ENCODE measurements at regions of chr6 and their contacts with region 1.

Region 1: GRCh38 chr6:42726485-42727086 is 4.2 kb upstream of the PRPH2 start:
- DNase-seq: peak; percentile 66
- ATAC-seq: peak; percentile 96
- H3K4me3 ChIP-seq: peak overlapping the region; percentile 58; the same call in 1 of the 2 replicates
- H3K27ac ChIP-seq: peak overlapping the region; percentile 60
- H3K4me1 ChIP-seq: peaks cover 10% of the 10 kb centered on the region; the same call in 1 of the 2 replicates
- H3K27me3 ChIP-seq: no peaks in the 10 kb centered on the region
- CTCF ChIP-seq: peak; percentile 76 to 97 (median 89)
- EP300 ChIP-seq: no peak
- POLR2A ChIP-seq: no peak
- RAD21 ChIP-seq: peak; percentile 92

Region 2: GRCh38 chr6:42692137-42692911 is 34.3 kb before region 1 on chr6:
- CTCF ChIA-PET with region 1: interaction called, 19 read pairs
- POLR2A ChIA-PET with region 1: no interaction called
- RAD21 ChIA-PET with region 1: interaction called, 3 read pairs
- SMC1A ChIA-PET with region 1: interaction called, 13 read pairs
- in situ Hi-C with region 1: no loop called
- intact Hi-C with region 1: no loop called
- DNase-seq: no peak
- ATAC-seq: no peak
- H3K4me3 ChIP-seq: no peak overlapping the region
- H3K27ac ChIP-seq: no peak overlapping the region
- H3K4me1 ChIP-seq: no peaks in the 10 kb centered on the region
- H3K27me3 ChIP-seq: no peaks in the 10 kb centered on the region
- CTCF ChIP-seq: no peak
- EP300 ChIP-seq: no peak
- POLR2A ChIP-seq: no peak
- RAD21 ChIP-seq: no peak

Region 3: DNA sequence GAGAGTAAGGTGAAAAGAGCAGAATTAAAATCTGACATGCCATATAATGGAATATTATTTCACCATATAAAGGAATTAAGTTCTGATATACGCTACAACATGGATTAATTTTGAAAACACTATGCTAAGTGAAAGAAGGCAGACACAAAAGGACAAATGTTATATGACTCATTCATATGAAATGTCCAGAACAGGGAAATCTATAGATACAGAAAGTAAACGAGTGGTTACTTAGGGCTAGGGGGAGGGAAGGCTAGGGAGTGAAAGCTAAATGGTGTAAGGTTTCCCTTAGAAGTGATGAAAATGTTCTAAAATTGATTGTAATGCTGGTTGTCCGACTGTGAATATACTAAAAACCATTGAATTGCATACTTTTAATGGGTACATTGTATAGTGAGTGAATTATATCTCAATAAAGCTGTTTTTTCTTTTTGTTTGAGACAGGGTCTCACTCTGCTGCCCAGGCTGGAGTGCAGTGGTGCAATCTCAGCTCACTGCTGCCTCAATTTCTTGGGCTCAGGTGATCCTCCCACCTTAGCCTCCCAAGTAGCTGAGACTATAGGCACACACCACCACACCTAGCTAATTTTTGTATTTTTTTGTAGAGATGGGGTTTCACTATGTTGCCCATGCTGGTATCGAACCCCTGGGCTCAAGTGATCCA is 12.4 kb before region 1 on chr6:
- CTCF ChIA-PET with region 1: interaction called, 11 read pairs
- POLR2A ChIA-PET with region 1: interaction called, 3 read pairs
- RAD21 ChIA-PET with region 1: no interaction called
- SMC1A ChIA-PET with region 1: interaction called, 9 read pairs
- in situ Hi-C with region 1: no loop called
- intact Hi-C with region 1: no loop called
- DNase-seq: no peak
- ATAC-seq: 0 out of 3 replicates have a peak, but pooled peaks have one; percentile 26
- H3K4me3 ChIP-seq: no peak overlapping the region
- H3K27ac ChIP-seq: no peak overlapping the region
- H3K4me1 ChIP-seq: peaks cover 4% of the 10 kb centered on the region; the same call in 1 of the 2 replicates
- H3K27me3 ChIP-seq: no peaks in the 10 kb centered on the region; a peak in 1 of 4 replicates
- CTCF ChIP-seq: no peak
- EP300 ChIP-seq: no peak
- POLR2A ChIP-seq: no peak
- RAD21 ChIP-seq: no peak

Region 4: DNA sequence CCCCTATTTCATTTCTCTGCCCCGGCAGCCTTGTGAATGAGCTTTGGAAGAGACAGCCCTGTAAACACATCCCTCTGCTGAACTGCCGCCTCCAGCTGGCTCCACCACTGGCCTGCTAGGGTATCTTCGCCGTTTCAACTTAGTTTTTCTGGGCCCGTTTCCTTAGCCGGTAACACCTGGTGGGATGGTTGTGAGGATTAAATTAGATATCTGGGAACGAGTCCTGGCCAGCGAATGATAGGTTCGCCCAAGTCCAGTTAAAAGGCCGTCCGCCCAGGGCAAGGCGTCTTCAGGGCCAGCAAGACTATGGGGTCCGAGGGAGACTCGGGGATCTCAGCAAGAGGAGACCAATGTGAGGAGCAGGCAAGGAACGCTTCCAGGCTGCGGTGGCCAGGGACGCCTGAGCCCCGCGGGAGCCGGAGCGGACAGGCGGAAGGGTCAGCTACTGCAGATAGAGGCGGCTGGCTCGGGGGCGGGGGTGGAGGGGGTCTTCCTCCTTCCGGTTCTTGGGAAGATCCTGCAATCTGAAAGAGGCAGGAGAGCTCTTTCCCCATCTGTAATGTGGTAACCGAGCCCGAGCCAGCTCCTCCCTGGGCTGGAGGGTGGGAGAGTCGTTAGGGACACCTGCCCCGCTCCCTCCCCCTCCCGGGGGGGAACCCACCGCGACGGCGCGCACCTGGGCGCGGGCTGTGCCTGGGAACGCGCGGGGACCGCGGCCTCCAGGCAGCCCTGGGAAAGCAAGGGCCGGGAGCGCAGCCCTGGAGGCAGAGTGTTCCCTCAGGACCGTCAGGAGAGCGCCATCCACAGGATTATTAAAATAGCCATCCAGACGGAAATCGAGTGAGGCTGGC is 184.8 kb after region 1 on chr6:
- CTCF ChIA-PET with region 1: no interaction called
- POLR2A ChIA-PET with region 1: no interaction called
- RAD21 ChIA-PET with region 1: no interaction called
- SMC1A ChIA-PET with region 1: no interaction called
- in situ Hi-C with region 1: no loop called
- intact Hi-C with region 1: no loop called
- DNase-seq: no peak
- ATAC-seq: no peak
- H3K4me3 ChIP-seq: no peak overlapping the region
- H3K27ac ChIP-seq: no peak overlapping the region
- H3K4me1 ChIP-seq: peaks cover 6% of the 10 kb centered on the region
- H3K27me3 ChIP-seq: no peaks in the 10 kb centered on the region
- CTCF ChIP-seq: no peak
- EP300 ChIP-seq: no peak
- POLR2A ChIP-seq: no peak
- RAD21 ChIP-seq: no peak